HEK293 (cell line): ENCODE measurements at regions of chr6 and their contacts with region 1.

Region 1: DNA sequence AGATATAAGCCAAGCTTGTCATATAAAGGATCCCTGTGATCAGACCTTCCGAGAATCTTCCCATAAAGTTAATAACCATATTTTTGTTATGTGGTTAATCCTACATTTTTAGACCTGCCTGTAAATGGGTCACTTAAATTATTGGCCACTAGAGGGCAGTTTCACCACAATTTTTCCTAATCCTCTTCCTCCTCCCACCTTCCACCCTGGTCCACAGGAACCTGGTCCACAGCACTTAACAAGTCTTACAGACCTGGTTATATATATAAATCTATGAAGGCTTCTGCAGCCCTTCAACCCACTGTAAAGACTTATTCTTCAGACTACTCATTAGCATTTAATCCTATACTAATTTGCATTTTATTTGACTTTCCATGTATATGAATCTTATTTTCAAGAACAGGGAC is 28.3 kb downstream of the MRS2 start:
- H3K4me3 ChIP-seq: no peak overlapping the region
- H3K27ac ChIP-seq: no peak overlapping the region
- H3K4me1 ChIP-seq: no peaks in the 10 kb centered on the region
- CTCF ChIP-seq: no peak

Region 2: DNA sequence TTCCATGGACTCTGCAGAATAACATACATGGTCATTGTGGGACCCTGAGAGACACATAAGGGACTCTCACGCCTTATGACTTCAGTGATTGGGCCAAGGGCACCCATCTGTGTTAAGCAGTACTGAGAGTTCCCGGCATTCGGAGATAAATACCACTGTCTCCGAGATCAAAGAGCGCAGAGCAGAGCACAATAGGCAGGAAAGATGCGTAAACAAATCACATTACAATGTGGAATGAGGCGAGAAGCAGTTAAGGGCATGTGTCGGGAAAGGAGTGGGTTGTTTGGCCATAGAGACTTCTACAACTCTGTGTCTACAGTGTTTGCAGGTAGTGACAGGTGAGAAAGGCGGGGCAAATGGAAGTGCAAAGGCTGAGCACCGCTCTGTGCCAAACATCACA is 247.5 kb before region 1 on chr6:
- CTCF ChIA-PET with region 1: no interaction called
- POLR2A ChIA-PET with region 1: no interaction called
- H3K4me3 ChIP-seq: no peak overlapping the region
- H3K27ac ChIP-seq: no peak overlapping the region
- H3K4me1 ChIP-seq: peaks cover 8% of the 10 kb centered on the region
- CTCF ChIP-seq: no peak

Region 3: GRCh38 chr6:24391756-24392405 is 39.2 kb before region 1 on chr6:
- CTCF ChIA-PET with region 1: no interaction called
- POLR2A ChIA-PET with region 1: no interaction called
- H3K4me3 ChIP-seq: no peak overlapping the region
- H3K27ac ChIP-seq: no peak overlapping the region
- H3K4me1 ChIP-seq: no peaks in the 10 kb centered on the region
- CTCF ChIP-seq: no peak

Region 4: GRCh38 chr6:24417338-24417737 is 13.7 kb before region 1 on chr6:
- CTCF ChIA-PET with region 1: interaction called, 46 read pairs
- POLR2A ChIA-PET with region 1: no interaction called
- H3K4me3 ChIP-seq: no peak overlapping the region
- H3K27ac ChIP-seq: no peak overlapping the region
- H3K4me1 ChIP-seq: no peaks in the 10 kb centered on the region
- CTCF ChIP-seq: no peak

Region 5: DNA sequence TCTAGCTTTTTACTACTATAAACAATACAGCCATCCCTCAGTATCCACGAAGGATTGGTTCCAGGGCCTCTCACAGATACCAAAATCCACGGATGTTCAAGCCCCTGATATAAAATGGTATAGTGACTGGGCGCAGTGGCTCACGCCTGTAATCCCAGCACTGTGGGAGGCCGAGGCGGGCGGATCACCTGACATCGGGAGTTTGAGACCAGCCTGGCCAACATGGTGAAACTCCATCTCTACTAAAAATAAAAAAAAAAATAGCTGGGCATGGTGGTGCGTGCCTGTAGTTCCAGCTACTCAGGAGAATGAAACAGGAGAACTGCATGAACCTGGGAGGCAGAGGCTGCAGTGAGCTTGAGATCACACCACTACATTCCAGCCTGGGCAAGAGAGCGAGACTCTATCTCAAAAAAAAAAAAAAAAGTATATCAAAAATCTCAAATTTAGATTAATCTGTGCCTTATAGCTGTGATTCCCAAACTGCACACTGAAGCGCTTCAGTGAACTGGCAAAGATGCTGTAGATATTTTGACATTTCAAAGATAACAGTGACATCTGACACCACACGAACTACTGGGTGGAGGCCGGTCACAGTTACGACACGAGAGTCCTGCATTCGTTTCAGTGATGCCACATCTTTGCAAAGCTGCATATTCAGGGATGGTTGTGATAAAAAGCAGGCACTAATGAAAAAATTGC is 10.0 kb after region 1 on chr6:
- CTCF ChIA-PET with region 1: interaction called, 36 read pairs
- POLR2A ChIA-PET with region 1: no interaction called
- H3K4me3 ChIP-seq: no peak overlapping the region
- H3K27ac ChIP-seq: no peak overlapping the region
- H3K4me1 ChIP-seq: no peaks in the 10 kb centered on the region
- CTCF ChIP-seq: no peak

Region 6: GRCh38 chr6:24494821-24495795 is 64.1 kb after region 1 on chr6 and contains the start of gene ALDH5A1:
- CTCF ChIA-PET with region 1: interaction called, 10 read pairs
- POLR2A ChIA-PET with region 1: no interaction called
- H3K4me3 ChIP-seq: peak within 1 kb of the TSS; percentile 60
- H3K27ac ChIP-seq: peak within 1 kb of the TSS; percentile 80
- H3K4me1 ChIP-seq: 0 out of 2 replicates have a peak, but pooled peaks cover 2% of the 10 kb centered on the region
- CTCF ChIP-seq: peak; percentile 91

Region 7: GRCh38 chr6:24689964-24690363 is 258.9 kb after region 1 on chr6:
- CTCF ChIA-PET with region 1: interaction called, 10 read pairs
- POLR2A ChIA-PET with region 1: no interaction called
- H3K4me3 ChIP-seq: no peak overlapping the region
- H3K27ac ChIP-seq: no peak overlapping the region
- H3K4me1 ChIP-seq: peaks cover 4% of the 10 kb centered on the region; the same call in 1 of the 2 replicates
- CTCF ChIP-seq: no peak

Region 8: GRCh38 chr6:24699521-24700359 is 268.7 kb after region 1 on chr6:
- CTCF ChIA-PET with region 1: interaction called, 10 read pairs
- POLR2A ChIA-PET with region 1: no interaction called
- H3K4me3 ChIP-seq: no peak overlapping the region
- H3K27ac ChIP-seq: no peak overlapping the region
- H3K4me1 ChIP-seq: no peaks in the 10 kb centered on the region; the same call in 1 of the 2 replicates
- CTCF ChIP-seq: no peak